Colonic mucosa (tissue), 4 donors: ENCODE measurements at regions of chr19 and their contacts with region 1.

Region 1: DNA sequence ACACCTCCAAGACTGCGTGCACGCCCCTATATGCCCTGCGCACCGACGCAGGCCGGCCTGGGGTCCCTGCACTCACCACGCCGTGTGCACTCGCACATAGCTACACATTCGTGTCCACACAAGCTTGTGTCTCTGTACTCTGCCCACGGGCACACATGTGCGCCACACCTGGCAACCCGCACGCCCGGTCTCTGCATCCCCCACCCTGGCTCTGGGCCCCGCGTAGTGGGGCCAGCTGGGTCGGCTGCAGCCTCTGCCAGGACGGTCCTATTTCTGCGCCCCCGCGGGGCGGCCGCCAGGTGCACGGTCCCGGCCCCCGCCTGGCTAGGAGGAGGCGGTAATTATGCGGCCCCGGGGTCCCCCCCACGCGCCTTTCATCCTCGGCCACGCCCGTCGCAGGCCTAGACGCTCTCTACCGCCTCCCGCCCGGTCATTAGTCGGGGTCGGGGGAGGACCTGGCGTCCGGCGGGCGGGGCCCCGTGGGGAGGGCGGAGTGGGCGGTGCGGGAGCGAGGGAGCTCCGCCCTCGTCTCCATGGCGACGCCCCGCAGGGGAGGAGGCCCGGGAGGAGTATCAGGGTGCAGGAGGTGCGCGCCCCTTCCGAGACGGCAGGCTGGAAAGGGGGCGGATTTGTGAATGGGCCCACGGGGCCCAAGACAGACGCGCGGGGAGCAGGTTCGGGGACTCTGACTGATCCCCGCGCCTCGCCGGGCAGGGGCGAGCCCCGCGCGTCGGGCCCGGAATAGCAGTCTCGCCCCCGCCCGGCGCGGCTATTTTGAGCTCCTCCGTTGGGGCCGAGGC is 2.8 kb upstream of the CIRBP start:
- DNase-seq: peak; percentile 95
- H3K4me3 ChIP-seq: peak overlapping the region; percentile 50
- H3K27ac ChIP-seq: peak overlapping the region; percentile 84
- H3K4me1 ChIP-seq: peaks cover 49% of the 10 kb centered on the region
- H3K27me3 ChIP-seq: no peaks in the 10 kb centered on the region
- CTCF ChIP-seq: no peak

Region 2: DNA sequence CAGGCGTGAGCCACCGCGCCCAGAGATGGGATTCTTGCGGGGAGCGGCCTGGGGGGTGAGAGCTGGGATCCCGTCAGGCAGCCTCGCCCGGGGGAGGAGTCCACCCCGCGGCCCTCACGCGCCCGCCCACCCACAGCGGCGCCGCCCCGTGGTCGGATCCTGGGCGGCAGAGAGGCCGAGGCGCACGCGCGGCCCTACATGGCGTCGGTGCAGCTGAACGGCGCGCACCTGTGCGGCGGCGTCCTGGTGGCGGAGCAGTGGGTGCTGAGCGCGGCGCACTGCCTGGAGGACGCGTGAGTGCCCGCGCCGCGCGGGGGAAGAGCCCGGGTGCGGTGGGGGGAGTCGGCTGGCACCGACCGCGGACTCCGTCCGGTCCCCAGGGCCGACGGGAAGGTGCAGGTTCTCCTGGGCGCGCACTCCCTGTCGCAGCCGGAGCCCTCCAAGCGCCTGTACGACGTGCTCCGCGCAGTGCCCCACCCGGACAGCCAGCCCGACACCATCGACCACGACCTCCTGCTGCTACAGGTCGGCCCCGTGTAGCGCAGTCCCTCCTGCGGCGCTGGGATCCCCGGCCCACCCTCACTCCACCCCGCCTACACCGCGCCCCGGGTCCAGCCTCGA is 405.7 kb before region 1 on chr19:
- intact Hi-C with region 1: no loop called
- DNase-seq: peak; percentile 71
- H3K4me3 ChIP-seq: peak overlapping the region; percentile 32
- H3K27ac ChIP-seq: no peak overlapping the region
- H3K4me1 ChIP-seq: no peaks in the 10 kb centered on the region
- H3K27me3 ChIP-seq: peaks cover 9% of the 10 kb centered on the region
- CTCF ChIP-seq: no peak

Region 3: GRCh38 chr19:1243761-1244692 is 22.3 kb before region 1 on chr19:
- intact Hi-C with region 1: loop called (anchors 2 kb)
- DNase-seq: peak; percentile 91
- H3K4me3 ChIP-seq: peak overlapping the region; percentile 10
- H3K27ac ChIP-seq: peak overlapping the region; percentile 97
- H3K4me1 ChIP-seq: peaks cover 34% of the 10 kb centered on the region
- H3K27me3 ChIP-seq: no peaks in the 10 kb centered on the region
- CTCF ChIP-seq: peak; percentile 94

Region 4: GRCh38 chr19:1295169-1296012 is 29.1 kb after region 1 on chr19:
- intact Hi-C with region 1: no loop called
- DNase-seq: no peak
- H3K4me3 ChIP-seq: no peak overlapping the region
- H3K27ac ChIP-seq: no peak overlapping the region
- H3K4me1 ChIP-seq: peaks cover 6% of the 10 kb centered on the region
- H3K27me3 ChIP-seq: no peaks in the 10 kb centered on the region
- CTCF ChIP-seq: no peak

Region 5: GRCh38 chr19:1315470-1316231 is 49.3 kb after region 1 on chr19:
- intact Hi-C with region 1: no loop called
- DNase-seq: peak; percentile 73
- H3K4me3 ChIP-seq: peak overlapping the region; percentile 30
- H3K27ac ChIP-seq: no peak overlapping the region
- H3K4me1 ChIP-seq: peaks cover 8% of the 10 kb centered on the region
- H3K27me3 ChIP-seq: peaks cover 18% of the 10 kb centered on the region
- CTCF ChIP-seq: peak; percentile 51

Region 6: GRCh38 chr19:1360818-1361461 is 94.6 kb after region 1 on chr19:
- intact Hi-C with region 1: no loop called
- DNase-seq: no peak
- H3K4me3 ChIP-seq: no peak overlapping the region
- H3K27ac ChIP-seq: peak overlapping the region; percentile 58
- H3K4me1 ChIP-seq: no peaks in the 10 kb centered on the region
- H3K27me3 ChIP-seq: no peaks in the 10 kb centered on the region
- CTCF ChIP-seq: no peak